GM12878 (cell line): ENCODE measurements at regions of chr2 and their contacts with region 1.

Region 1: DNA sequence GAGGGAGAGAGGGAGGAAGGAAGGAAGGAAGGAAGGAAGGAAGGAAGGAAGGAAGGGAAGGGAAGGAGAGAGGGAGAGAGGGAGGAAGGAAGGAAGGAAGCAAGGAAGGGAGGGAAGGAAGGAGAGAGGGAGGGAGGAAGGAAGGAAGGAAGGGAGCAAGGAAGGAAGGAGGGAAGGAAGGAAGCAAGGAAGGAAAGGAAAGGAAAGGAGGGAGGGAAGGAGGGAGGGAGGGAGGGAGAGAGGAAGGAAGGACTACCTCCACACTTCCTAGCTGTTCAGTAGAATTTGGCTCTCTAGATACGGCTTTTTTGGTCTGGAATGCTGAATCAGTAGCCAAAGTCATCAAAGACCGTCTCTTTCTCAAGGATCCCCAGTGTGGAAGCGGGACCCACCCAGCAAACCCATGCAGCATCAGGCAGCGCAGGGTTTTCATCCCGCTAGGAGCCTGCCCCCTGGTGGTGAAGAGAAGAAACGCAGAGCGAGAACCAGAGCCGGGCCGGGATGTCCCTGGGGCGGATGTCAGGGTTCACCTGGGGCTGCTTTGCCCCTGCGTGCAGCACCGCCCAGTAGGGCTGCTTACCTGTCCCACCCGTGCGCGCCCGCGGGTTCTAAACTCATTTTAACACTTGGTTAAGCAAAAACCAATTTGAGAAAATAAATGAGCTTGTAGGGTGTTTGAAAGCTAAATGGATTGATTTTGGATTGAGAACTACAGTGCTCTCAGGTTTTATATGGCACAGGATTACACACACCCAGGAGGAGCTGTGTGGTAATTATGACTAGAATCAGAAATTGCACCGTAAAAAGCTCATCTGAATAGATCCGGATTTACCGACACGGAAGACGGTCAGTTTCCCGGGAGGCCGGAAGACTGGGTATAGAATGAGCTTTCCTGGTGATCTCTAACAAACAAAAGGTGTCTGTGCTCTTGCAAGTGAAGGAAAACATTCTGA is 48.1 kb upstream of the ARL4C start:
- DNase-seq: no peak
- ATAC-seq: peak; percentile 93
- H3K4me3 ChIP-seq: no peak overlapping the region
- H3K27ac ChIP-seq: no peak overlapping the region
- H3K4me1 ChIP-seq: no peaks in the 10 kb centered on the region
- H3K27me3 ChIP-seq: no peaks in the 10 kb centered on the region; a peak in 1 of 4 replicates
- CTCF ChIP-seq: peak; percentile 77 to 90 (median 82)
- EP300 ChIP-seq: no peak
- POLR2A ChIP-seq: no peak
- RAD21 ChIP-seq: peak; percentile 57

Region 2: DNA sequence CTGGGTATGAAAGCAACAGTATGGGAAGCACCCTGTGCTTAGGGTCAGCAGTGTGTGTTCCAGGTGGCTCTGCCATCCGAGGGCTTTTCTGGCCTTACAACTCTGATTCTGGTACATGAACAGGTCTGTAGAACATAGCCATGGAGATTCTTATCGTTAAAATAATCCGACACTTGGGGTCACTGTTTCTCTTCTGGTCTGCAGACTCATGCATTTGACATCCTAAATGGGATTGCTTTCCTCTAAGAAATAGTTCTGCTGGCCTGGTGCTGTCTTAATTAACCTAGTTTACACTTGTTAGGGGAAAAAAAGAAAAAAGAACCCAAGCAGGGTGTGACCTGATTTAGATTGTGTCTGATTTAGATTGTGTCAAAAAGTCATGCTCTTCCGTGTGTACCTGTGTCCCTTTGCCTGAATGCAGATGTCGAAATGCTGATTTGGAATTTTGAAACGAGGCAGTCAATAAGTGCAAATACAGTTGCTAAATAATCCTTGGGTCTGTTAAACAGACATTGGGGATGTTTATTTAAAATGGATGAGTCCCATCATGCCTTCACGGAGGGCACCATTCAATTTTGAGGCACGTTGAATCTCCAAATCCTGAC is 568.1 kb before region 1 on chr2:
- CTCF ChIA-PET with region 1: interaction called, 9 read pairs
- POLR2A ChIA-PET with region 1: no interaction called
- RAD21 ChIA-PET with region 1: interaction called, 4 read pairs
- SMC1A ChIA-PET with region 1: interaction called, 5 read pairs
- in situ Hi-C with region 1: loop called (anchors 25 kb)
- intact Hi-C with region 1: loop called (anchors 1 kb)
- DNase-seq: peak; percentile 9
- ATAC-seq: peak; percentile 79
- H3K4me3 ChIP-seq: no peak overlapping the region
- H3K27ac ChIP-seq: no peak overlapping the region
- H3K4me1 ChIP-seq: no peaks in the 10 kb centered on the region
- H3K27me3 ChIP-seq: no peaks in the 10 kb centered on the region; a peak in 1 of 4 replicates
- CTCF ChIP-seq: peak; percentile 37 to 58 (median 37); a peak in 5 of 6 replicates
- EP300 ChIP-seq: no peak
- POLR2A ChIP-seq: no peak
- RAD21 ChIP-seq: peak; percentile 58

Region 3: DNA sequence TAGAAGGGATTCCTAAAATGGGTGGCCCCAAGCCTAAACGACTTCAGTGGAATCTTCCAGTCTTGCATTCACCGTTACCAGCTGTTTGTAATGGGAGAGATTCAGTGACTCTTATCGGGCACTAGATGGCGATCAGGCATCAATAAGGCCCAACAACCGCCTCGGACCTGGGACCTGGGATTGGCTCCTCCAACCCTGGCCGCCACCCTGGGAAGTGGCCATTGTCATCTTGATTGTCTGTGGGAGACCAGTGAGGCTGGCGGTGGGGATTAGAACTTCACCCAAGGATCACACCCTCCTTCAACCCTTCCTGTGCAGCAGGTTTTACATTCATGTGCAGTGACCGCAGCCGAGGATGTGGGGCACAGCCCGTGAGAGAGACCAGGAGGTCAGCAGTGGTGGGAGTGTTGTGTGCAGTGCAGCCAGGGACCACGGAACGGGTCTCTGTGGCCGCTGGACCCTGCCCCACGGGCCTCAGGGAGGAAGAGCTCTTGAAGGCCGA is 409.2 kb before region 1 on chr2:
- CTCF ChIA-PET with region 1: interaction called, 23 read pairs
- POLR2A ChIA-PET with region 1: no interaction called
- RAD21 ChIA-PET with region 1: interaction called, 9 read pairs
- SMC1A ChIA-PET with region 1: interaction called, 8 read pairs
- in situ Hi-C with region 1: loop called (anchors 5 kb)
- intact Hi-C with region 1: loop called (anchors 1 kb)
- DNase-seq: peak; percentile 5
- ATAC-seq: peak; percentile 88
- H3K4me3 ChIP-seq: no peak overlapping the region
- H3K27ac ChIP-seq: no peak overlapping the region
- H3K4me1 ChIP-seq: no peaks in the 10 kb centered on the region
- H3K27me3 ChIP-seq: no peaks in the 10 kb centered on the region; a peak in 3 of 4 replicates
- CTCF ChIP-seq: peak; percentile 62 to 79 (median 68)
- EP300 ChIP-seq: no peak
- POLR2A ChIP-seq: no peak
- RAD21 ChIP-seq: peak; percentile 70

Region 4: DNA sequence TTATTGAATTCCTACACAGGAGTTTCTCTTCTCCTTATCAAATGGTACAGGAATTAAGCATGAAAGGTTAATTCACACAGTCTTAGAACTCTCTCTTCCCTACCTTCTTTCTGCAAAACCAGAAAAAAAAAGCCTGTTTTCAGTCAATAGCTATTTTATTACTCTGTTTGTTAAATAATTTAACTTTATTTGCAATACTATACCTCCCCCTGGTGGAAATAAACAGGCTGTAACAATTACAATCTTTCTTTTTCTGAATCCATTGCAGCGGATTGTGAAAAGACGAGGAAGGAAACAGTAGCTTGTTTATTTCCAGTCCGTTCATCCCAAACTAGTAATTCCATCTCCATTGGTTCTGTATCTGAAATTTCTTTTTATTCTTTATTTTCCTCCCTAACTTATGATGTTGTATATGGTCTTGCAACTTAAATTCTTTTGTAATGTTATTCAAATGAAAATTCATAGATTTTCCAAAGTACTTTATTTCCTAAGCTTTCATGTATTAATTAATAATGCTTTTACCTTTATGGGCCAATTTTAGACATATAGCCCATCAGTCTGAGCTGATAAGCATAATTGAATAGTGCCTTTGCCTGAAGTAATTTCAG is 572.1 kb after region 1 on chr2:
- CTCF ChIA-PET with region 1: interaction called, 11 read pairs
- POLR2A ChIA-PET with region 1: no interaction called
- RAD21 ChIA-PET with region 1: interaction called, 7 read pairs
- SMC1A ChIA-PET with region 1: interaction called, 5 read pairs
- in situ Hi-C with region 1: loop called (anchors 5 kb)
- intact Hi-C with region 1: loop called (anchors 1 kb)
- DNase-seq: no peak
- ATAC-seq: no peak
- H3K4me3 ChIP-seq: no peak overlapping the region
- H3K27ac ChIP-seq: no peak overlapping the region
- H3K4me1 ChIP-seq: no peaks in the 10 kb centered on the region
- H3K27me3 ChIP-seq: no peaks in the 10 kb centered on the region
- CTCF ChIP-seq: peak; percentile 32 to 45 (median 40); a peak in 4 of 6 replicates
- EP300 ChIP-seq: no peak
- POLR2A ChIP-seq: no peak
- RAD21 ChIP-seq: peak; percentile 57